GM10248 (cell line): ENCODE measurements at regions of chr17 and their contacts with region 1.

Region 1: GRCh38 chr17:27236717-27237315 is 57.1 kb upstream of the WSB1 start:
- DNase-seq: peak; percentile 64
- CTCF ChIP-seq: peak; percentile 85

Region 2: GRCh38 chr17:27217631-27218030 is 19.2 kb before region 1 on chr17:
- CTCF ChIA-PET with region 1: interaction called, 141 read pairs
- POLR2A ChIA-PET with region 1: no interaction called
- DNase-seq: peak; percentile 42
- CTCF ChIP-seq: no peak

Region 3: GRCh38 chr17:27293898-27294688 is 57.3 kb after region 1 on chr17 and contains the start of gene WSB1:
- CTCF ChIA-PET with region 1: interaction called, 14 read pairs
- POLR2A ChIA-PET with region 1: interaction called, 12 read pairs
- DNase-seq: peak; percentile 97
- CTCF ChIP-seq: no peak

Region 4: DNA sequence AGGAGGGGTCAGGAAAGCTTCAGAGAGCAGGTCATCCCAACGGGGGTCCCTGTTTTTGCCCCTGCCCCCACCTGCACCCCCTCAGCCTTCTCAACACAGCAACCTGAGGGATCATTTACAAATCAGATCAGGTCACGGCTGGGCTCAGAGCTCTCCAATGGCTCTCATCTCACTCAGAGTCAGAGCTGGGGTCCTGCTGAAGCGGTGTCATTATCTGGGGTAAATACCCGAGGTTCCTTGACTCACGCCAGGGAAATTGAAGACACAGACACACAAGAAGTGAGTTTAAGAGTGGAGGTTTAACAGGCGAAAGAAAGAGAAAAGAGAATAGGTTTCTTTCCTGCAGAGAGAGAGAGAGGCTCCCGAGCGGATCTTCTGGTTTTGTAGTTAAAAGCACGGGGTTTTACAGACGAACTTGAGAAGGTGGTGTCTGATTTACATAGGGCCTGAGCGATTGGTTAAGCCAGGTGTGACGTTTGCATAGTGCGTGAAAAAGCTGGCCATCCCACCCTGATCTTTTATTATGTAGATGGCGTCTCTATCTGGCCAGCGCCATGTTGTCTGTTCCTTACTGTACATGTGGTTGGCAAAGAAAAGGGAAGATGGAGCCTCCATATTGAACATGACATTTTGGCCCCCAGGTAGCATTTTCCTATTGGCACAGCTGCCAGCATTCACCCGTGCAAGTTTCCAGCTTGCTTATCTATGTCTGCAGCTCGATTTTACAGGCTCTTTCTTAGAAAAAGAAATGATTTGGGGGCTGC is 108.5 kb after region 1 on chr17:
- CTCF ChIA-PET with region 1: interaction called, 17 read pairs
- POLR2A ChIA-PET with region 1: no interaction called
- DNase-seq: no peak
- CTCF ChIP-seq: no peak

Region 5: DNA sequence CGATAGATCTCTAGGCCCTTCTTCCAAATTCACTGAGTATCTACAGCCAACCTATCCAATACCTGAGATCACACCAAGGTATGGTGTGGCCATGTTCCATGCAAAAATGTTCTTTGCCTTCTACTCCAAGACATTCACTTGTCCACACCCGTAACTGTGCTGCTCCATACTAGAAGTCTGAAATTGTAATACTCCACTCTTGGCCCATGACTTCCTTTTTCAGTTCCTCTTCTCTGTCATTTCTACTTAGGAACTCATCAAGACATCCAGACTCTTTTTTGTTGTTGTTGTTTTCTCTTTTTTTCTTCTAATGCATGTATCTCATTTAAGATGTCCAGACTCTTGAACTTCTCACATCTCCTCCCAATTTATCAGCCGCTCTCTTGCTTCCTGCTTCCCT is 177.0 kb after region 1 on chr17:
- CTCF ChIA-PET with region 1: interaction called, 10 read pairs
- POLR2A ChIA-PET with region 1: no interaction called
- DNase-seq: no peak
- CTCF ChIP-seq: no peak

Region 6: GRCh38 chr17:27654654-27655524 is 418.1 kb after region 1 on chr17:
- CTCF ChIA-PET with region 1: interaction called, 75 read pairs
- POLR2A ChIA-PET with region 1: no interaction called
- DNase-seq: peak; percentile 85
- CTCF ChIP-seq: peak; percentile 82